ENCODE measurements at regions of chr17 and their contacts with region 1.

Region 1: DNA sequence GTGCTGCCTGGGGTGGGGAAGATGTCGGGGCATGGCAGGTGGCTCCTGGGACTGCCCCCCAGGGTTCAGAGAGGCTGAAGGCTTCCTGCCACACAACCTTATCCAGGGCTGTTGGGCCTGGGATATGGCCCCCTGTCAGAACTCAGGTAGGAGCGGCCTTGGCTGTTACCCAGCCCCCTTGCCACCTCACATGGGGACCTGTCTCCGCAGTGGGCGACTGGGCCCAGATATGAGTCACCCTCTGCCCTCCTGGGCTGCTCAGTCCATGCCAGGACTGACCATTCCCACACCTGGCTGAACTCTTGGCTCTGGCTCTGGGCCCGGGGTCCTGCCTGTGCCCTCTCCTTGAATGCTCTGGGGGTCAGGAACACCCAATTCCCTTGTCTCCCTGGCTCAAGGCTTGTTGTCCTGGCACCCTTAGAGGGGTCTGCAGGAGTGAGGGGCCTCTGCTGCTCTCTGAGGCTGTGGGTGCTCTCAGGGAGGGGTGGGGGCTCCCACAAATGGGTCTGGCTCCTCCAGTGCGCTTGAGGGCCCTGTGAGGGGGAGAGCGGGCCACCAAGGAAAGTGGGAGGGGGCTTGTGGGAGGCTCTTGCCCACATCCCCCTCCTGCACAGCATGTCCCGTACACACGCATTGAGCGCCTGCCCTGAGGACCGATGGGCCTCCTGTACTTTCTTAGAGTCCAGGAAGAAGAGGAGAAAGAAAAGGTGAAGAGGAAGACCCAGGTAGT is 36.0 kb downstream of the LGALS9 start:
- DNase-seq: no peak
- ATAC-seq: no peak
- H3K4me3 ChIP-seq: no peak overlapping the region
- H3K27ac ChIP-seq: no peak overlapping the region
- H3K4me1 ChIP-seq: no peaks in the 10 kb centered on the region
- H3K27me3 ChIP-seq: no peaks in the 10 kb centered on the region; a peak in 3 of 4 replicates
- CTCF ChIP-seq: no peak
- EP300 ChIP-seq: no peak
- POLR2A ChIP-seq: no peak
- RAD21 ChIP-seq: no peak

Region 2: DNA sequence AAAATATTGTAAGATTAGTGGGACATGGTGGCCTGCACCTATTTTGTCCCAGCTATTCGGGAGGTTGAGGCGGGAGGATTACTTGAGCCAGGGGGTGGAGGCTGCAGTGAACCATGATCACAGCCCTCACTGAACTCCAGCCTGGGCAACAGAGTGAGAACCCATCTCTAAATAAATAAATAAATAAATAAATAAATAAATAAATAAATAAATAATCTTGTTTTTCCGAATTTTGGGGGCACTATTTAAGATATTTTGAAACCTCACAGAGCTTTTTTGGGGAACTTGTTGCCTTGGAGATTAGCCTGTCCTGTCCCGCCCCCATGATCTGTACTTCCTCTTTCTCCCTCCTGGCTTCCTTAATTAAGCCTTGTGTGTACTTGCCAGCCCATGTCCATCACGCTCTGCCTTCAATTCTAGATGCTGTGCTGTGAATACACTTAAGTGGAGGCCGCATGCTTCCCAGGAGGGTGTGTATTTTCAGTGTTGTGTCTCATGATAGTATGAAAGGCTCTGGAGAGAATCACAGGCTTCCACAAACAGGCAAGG is 31.6 kb before region 1 on chr17:
- CTCF ChIA-PET with region 1: no interaction called
- POLR2A ChIA-PET with region 1: no interaction called
- RAD21 ChIA-PET with region 1: no interaction called
- SMC1A ChIA-PET with region 1: no interaction called
- in situ Hi-C with region 1: no loop called
- intact Hi-C with region 1: no loop called
- DNase-seq: no peak
- ATAC-seq: peak; percentile 49
- H3K4me3 ChIP-seq: peak overlapping the region; percentile 60
- H3K27ac ChIP-seq: peak overlapping the region; percentile 43
- H3K4me1 ChIP-seq: peaks cover 11% of the 10 kb centered on the region
- H3K27me3 ChIP-seq: no peaks in the 10 kb centered on the region
- CTCF ChIP-seq: no peak
- EP300 ChIP-seq: no peak
- POLR2A ChIP-seq: no peak
- RAD21 ChIP-seq: no peak

Region 3: DNA sequence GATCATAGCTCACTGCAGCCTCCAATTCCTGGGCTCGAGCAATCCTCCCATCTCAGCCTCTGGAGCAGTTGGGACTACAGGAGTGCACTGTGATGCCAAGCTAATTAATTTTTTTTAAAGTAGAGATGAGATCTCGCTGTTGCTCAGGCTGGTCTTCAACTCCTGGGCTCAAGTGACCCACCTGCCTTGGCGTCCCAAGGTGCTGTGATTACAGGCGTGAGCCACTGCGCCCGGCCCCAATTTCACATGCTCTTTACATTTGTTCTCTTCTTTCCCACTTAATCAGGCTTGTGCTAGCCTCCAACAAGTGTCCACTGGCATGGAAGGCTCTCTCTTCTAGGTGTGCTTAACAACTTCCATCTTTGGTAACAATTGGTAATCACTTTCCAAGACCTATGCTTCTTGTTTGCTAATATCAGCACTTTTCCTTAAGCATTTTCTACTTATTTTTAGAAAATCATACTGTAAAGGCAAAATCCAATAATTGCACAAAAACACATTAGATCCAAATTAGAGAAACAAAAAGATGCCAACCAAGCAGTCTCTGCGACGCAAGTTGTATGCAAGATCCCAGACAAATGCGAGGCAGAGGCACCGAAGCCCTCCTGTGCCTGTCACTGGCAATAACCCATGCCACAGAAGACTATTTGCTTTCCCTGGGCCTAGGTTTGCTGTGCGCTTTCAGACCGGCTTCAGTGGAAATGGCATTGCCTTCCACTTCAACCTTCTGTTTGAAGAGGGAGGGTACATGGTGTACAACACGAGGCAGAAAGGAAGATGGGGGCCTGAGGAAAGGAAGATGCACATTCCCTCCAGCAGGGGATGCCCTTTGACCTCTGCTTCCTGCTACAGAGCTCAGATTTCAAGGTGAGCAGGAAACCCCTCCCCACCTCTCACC is 80.7 kb after region 1 on chr17:
- CTCF ChIA-PET with region 1: no interaction called
- POLR2A ChIA-PET with region 1: no interaction called
- RAD21 ChIA-PET with region 1: no interaction called
- SMC1A ChIA-PET with region 1: no interaction called
- in situ Hi-C with region 1: loop called (anchors 10 kb)
- intact Hi-C with region 1: no loop called
- DNase-seq: no peak
- ATAC-seq: no peak
- H3K4me3 ChIP-seq: no peak overlapping the region
- H3K27ac ChIP-seq: no peak overlapping the region
- H3K4me1 ChIP-seq: peaks cover 5% of the 10 kb centered on the region
- H3K27me3 ChIP-seq: no peaks in the 10 kb centered on the region
- CTCF ChIP-seq: peak in 2 of 3 experiments; percentile 12 to 28; a peak in 1 of 6 replicates
- EP300 ChIP-seq: no peak
- POLR2A ChIP-seq: no peak
- RAD21 ChIP-seq: no peak